Mammary epithelial cell (primary cell): ENCODE measurements at regions of chr2 and their contacts with region 1.

Region 1: DNA sequence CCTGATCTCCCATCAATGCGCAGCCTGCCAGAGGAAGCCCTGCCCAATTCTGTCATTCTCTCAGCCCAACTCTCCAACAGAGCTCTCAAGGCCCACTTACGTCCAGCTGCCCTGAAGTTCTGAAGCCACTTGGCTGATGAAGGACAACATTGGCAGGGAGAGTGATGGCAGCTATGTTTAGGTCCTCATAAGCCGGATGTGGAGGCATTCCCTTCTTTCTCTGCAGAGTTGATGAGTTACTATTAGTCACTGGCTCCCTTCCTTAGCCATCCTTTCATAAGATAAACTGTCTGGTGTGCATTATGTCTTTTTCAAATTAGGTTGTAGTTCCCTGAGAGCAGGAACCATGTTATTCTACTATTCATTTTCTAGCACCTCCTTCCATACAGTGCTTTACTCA is 22.5 kb upstream of the TACR1 start:
- DNase-seq: peak; percentile 47
- H3K4me3 ChIP-seq: no peak overlapping the region
- H3K27ac ChIP-seq: no peak overlapping the region
- H3K4me1 ChIP-seq: peaks cover 3% of the 10 kb centered on the region
- H3K27me3 ChIP-seq: no peaks in the 10 kb centered on the region
- CTCF ChIP-seq: no peak

Region 2: GRCh38 chr2:75268112-75268511 is 46.2 kb after region 1 on chr2:
- CTCF ChIA-PET with region 1: no interaction called
- dilution Hi-C with region 1: no loop called
- in situ Hi-C with region 1: no loop called
- intact Hi-C with region 1: no loop called
- DNase-seq: no peak
- H3K4me3 ChIP-seq: no peak overlapping the region
- H3K27ac ChIP-seq: no peak overlapping the region
- H3K4me1 ChIP-seq: no peaks in the 10 kb centered on the region
- H3K27me3 ChIP-seq: no peaks in the 10 kb centered on the region
- CTCF ChIP-seq: no peak

Region 3: DNA sequence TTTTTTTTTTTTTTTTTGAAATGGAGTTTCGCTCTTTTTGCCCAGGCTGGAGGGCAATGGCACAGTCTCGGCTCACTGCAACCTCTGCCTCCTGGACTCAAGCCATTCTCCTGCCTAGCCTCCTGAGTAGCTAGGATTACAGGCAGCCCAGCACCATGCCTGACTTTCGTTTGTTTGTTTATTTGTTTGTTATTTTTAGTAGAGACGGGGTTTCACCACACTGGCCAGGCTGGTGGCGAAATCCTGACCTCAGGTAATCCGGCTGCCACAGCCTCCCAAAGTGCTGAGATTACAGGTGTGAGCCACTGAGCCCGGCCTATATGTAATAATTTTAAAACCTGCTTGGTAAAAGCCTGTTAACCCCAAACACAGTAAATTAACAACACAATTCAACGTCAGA is 1864.6 kb after region 1 on chr2:
- CTCF ChIA-PET with region 1: no interaction called
- dilution Hi-C with region 1: loop called (anchors 5 kb)
- in situ Hi-C with region 1: no loop called
- intact Hi-C with region 1: no loop called
- DNase-seq: no peak
- H3K4me3 ChIP-seq: no peak overlapping the region
- H3K27ac ChIP-seq: no peak overlapping the region
- H3K4me1 ChIP-seq: no peaks in the 10 kb centered on the region
- H3K27me3 ChIP-seq: no peaks in the 10 kb centered on the region
- CTCF ChIP-seq: no peak